Body of pancreas (tissue), 4 donors: ENCODE measurements at regions of chr1 and their contacts with region 1.

Region 1: DNA sequence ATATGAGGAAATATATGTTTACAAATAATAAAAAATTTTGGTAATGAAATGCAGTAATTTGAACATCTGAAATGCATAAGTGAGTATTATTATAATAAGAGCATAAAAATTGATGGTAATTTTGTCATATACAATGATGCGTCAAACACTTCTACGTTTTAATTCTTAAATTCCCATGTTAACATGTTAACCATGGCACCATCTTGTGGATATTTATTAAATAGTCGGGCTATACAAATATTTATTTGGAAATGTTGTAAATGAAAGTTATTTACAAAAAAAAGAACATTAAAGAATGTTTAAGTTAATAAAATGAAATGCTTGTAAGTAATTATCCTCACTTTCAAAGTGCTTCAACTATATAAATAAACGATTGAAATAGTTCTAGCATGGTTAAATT is 57.2 kb upstream of the C1orf185 start:
- DNase-seq: no peak
- ATAC-seq: no peak
- H3K4me3 ChIP-seq: no peak overlapping the region
- H3K27ac ChIP-seq: no peak overlapping the region
- H3K4me1 ChIP-seq: no peaks in the 10 kb centered on the region
- H3K27me3 ChIP-seq: no peaks in the 10 kb centered on the region
- CTCF ChIP-seq: peak in 6 of 7 experiments; percentile 21 to 55 (median 50)
- POLR2A ChIP-seq: no peak

Region 2: DNA sequence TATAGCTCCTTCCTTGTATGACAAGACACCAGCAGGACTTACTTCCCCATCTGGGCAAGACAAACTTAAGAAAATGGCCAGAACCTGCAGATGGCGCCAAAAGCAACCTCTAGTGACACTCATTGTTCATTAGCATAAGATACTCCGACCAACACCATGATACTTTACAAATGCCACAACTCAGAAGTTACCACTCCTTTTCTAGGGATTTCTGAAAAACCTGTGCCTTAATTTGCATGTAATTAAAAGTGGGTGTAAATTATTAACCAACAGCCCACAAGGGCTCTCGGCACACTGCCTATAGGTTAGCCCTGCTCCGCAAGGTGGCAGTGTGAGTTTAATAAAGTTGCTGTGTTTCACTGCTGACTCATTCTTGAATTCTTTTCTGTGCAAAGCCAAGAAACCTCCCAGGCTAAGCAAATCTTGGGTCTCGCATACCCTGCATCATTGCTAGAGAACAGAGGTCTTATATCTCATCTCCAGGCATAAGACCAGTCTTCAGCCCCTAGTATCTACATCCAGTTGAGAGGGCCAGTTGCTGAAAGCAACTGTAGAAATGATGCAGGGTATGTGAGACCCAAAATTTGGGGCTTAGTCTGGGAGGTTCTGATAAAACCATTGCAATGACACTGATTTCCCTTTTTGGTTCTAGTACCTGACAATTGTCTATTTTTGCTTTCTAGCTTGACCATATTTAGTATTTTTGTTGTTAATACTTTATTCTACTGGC is 171.2 kb before region 1 on chr1:
- intact Hi-C with region 1: loop called (anchors 10 kb)
- DNase-seq: peak; percentile 62 to 83 (median 79)
- ATAC-seq: peak; percentile 94
- H3K4me3 ChIP-seq: no peak overlapping the region
- H3K27ac ChIP-seq: no peak overlapping the region
- H3K4me1 ChIP-seq: no peaks in the 10 kb centered on the region
- H3K27me3 ChIP-seq: no peaks in the 10 kb centered on the region
- CTCF ChIP-seq: peak; percentile 54 to 94 (median 67)
- POLR2A ChIP-seq: no peak

Region 3: GRCh38 chr1:51058858-51059257 is 14.0 kb after region 1 on chr1:
- intact Hi-C with region 1: no loop called
- DNase-seq: no peak
- ATAC-seq: no peak
- H3K4me3 ChIP-seq: no peak overlapping the region
- H3K27ac ChIP-seq: no peak overlapping the region
- H3K4me1 ChIP-seq: no peaks in the 10 kb centered on the region
- H3K27me3 ChIP-seq: no peaks in the 10 kb centered on the region
- CTCF ChIP-seq: peak in 4 of 7 experiments; percentile 15 to 32 (median 24)
- POLR2A ChIP-seq: no peak